CD8-positive, alpha-beta T cell (primary cell): ENCODE measurements at regions of chr17 and their contacts with region 1.

Region 1: GRCh38 chr17:32127158-32127897 is 15.0 kb upstream of the RHOT1 start:
- DNase-seq: peak; percentile 57 to 89 (median 83)
- ATAC-seq: peak; percentile 100
- H3K4me3 ChIP-seq: peak overlapping the region; percentile 71 to 99
- H3K4me3 Mint-ChIP-seq: peak overlapping the region; percentile 96
- H3K27ac ChIP-seq: peak overlapping the region; percentile 74 to 85
- H3K27ac Mint-ChIP-seq: peak overlapping the region; percentile 98
- H3K4me1 ChIP-seq: peaks cover 21% of the 10 kb centered on the region
- H3K4me1 Mint-ChIP-seq: peaks cover 22% of the 10 kb centered on the region
- H3K27me3 ChIP-seq: no peaks in the 10 kb centered on the region
- H3K27me3 Mint-ChIP-seq: no peaks in the 10 kb centered on the region
- CTCF ChIP-seq: no peak

Region 2: DNA sequence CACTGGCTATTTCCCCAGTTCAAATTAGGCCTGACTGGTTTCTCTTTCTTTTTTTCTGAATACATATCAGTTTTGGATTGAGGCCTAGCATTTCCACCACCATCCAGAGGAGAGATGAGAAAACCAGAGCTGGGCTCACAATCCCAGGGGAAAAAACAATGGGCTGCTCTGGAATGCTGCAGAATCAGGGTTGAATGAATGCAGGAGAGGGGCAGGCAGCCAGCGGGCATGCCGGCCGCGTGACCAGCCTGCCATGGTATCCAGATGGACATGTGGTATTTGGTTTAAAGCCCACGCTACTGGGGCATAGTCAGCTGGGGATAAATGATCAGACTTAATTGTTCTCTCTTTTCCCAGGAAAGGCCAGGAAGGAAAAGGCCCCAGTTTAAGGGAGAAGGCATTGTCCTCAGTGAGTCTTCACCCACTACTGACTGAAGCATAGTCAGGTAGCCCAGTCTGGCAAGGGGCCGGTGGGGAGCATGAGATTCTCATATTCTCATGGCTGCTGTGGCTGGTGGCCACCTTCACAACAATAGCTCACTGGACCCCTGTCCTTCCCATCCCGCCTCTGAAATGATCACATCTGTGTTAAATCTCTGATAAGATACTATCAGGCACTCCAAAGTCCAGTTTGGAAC is 23.7 kb before region 1 on chr17:
- CTCF ChIA-PET with region 1: no interaction called
- POLR2A ChIA-PET with region 1: interaction called, 12 read pairs
- intact Hi-C with region 1: no loop called
- DNase-seq: no peak
- ATAC-seq: no peak
- H3K4me3 ChIP-seq: no peak overlapping the region
- H3K4me3 Mint-ChIP-seq: peak overlapping the region; percentile 44
- H3K27ac ChIP-seq: peak overlapping the region; percentile 44 to 77
- H3K27ac Mint-ChIP-seq: peak overlapping the region; percentile 94
- H3K4me1 ChIP-seq: peaks cover 36% of the 10 kb centered on the region
- H3K4me1 Mint-ChIP-seq: peaks cover 34% of the 10 kb centered on the region
- H3K27me3 ChIP-seq: no peaks in the 10 kb centered on the region
- H3K27me3 Mint-ChIP-seq: no peaks in the 10 kb centered on the region
- CTCF ChIP-seq: no peak

Region 3: GRCh38 chr17:32155896-32156295 is 28.6 kb after region 1 on chr17:
- CTCF ChIA-PET with region 1: no interaction called
- POLR2A ChIA-PET with region 1: no interaction called
- intact Hi-C with region 1: loop called in 1 of 2 experiments (anchors 2 kb)
- DNase-seq: no peak
- ATAC-seq: no peak
- H3K4me3 ChIP-seq: no peak overlapping the region
- H3K4me3 Mint-ChIP-seq: no peak overlapping the region
- H3K27ac ChIP-seq: no peak overlapping the region
- H3K27ac Mint-ChIP-seq: no peak overlapping the region
- H3K4me1 ChIP-seq: no peaks in the 10 kb centered on the region
- H3K4me1 Mint-ChIP-seq: peaks cover 3% of the 10 kb centered on the region
- H3K27me3 ChIP-seq: no peaks in the 10 kb centered on the region
- H3K27me3 Mint-ChIP-seq: no peaks in the 10 kb centered on the region
- CTCF ChIP-seq: no peak